MCF 10A (cell line): ENCODE measurements at regions of chr22 and their contacts with region 1.

Region 1: GRCh38 chr22:31345331-31346254 is 553 bp downstream of the PATZ1 start:
- DNase-seq: peak; percentile 83
- H3K4me3 Mint-ChIP-seq: peak overlapping the region; percentile 76
- H3K27ac Mint-ChIP-seq: no peak overlapping the region
- H3K4me1 Mint-ChIP-seq: peaks cover 18% of the 10 kb centered on the region
- H3K27me3 Mint-ChIP-seq: no peaks in the 10 kb centered on the region
- CTCF ChIP-seq: peak; percentile 78

Region 2: GRCh38 chr22:31465307-31465706 is 119.7 kb after region 1 on chr22:
- CTCF ChIA-PET with region 1: no interaction called
- POLR2A ChIA-PET with region 1: no interaction called
- intact Hi-C with region 1: no loop called
- DNase-seq: no peak
- H3K4me3 Mint-ChIP-seq: no peak overlapping the region
- H3K27ac Mint-ChIP-seq: no peak overlapping the region
- H3K4me1 Mint-ChIP-seq: no peaks in the 10 kb centered on the region
- H3K27me3 Mint-ChIP-seq: no peaks in the 10 kb centered on the region
- CTCF ChIP-seq: no peak

Region 3: GRCh38 chr22:31630331-31631329 is 285.0 kb after region 1 on chr22:
- CTCF ChIA-PET with region 1: no interaction called
- POLR2A ChIA-PET with region 1: no interaction called
- intact Hi-C with region 1: loop called (anchors 10 kb)
- DNase-seq: peak; percentile 70
- H3K4me3 Mint-ChIP-seq: peak overlapping the region; percentile 75
- H3K27ac Mint-ChIP-seq: no peak overlapping the region
- H3K4me1 Mint-ChIP-seq: peaks cover 19% of the 10 kb centered on the region
- H3K27me3 Mint-ChIP-seq: no peaks in the 10 kb centered on the region
- CTCF ChIP-seq: no peak